ENCODE measurements at regions of chr11 and their contacts with region 1.

Region 1: GRCh38 chr11:128522055-128522942 is 65.1 kb downstream of the ETS1 start:
- DNase-seq: peak; percentile 97
- ATAC-seq: peak; percentile 93
- H3K4me3 ChIP-seq: peak overlapping the region; percentile 82 to 93
- H3K27ac ChIP-seq: peak overlapping the region; percentile 94
- H3K4me1 ChIP-seq: peaks cover 41% of the 10 kb centered on the region
- H3K27me3 ChIP-seq: no peaks in the 10 kb centered on the region
- CTCF ChIP-seq: no peak

Region 2: DNA sequence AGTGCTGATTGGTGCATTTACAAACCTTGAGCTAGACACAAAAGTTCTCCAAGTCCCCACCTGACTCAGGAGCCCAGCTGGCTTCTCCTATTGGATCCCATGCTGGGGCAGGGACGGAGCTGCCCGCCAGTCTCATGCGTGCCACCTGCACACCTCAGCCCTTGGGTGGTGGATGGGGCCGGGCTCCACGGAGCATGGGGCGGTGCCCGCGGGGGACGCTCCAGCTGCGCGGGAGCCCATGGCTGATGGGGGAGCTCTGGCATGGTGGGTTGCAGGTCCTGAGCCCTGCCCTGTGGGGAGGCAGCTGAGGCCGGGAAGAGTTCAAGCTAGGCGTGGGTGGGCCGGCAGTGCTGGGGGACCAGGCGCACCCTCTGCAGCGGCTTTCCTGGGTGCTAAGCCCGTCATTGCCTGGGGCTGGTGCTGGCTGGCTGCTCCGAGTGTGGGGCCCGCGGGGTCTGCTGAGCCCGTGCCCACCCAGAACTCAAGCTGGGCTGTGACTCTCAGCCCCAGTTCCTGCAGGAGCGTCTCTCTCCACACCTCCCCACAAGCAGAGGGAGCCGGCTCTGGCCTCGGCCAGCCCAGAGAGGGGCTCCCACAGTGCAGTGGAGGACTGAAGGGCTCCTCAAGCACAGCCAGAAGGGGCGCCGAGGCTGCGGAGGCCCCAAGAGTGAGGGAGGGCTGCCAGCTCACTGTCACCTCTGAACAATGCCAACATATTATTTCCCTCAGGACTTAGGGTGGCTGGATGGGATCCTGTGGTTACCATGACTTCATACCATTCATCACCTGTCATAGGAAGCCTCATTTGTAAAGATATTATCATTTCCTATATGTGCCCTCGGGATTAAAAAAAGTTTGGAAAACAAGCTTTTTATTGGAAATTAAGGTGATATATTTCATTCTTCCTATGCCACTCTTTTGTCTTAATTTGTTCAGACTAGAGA is 623.6 kb before region 1 on chr11:
- CTCF ChIA-PET with region 1: no interaction called
- POLR2A ChIA-PET with region 1: interaction called, 14 read pairs
- in situ Hi-C with region 1: no loop called
- intact Hi-C with region 1: no loop called
- DNase-seq: no peak
- ATAC-seq: no peak
- H3K4me3 ChIP-seq: no peak overlapping the region
- H3K27ac ChIP-seq: no peak overlapping the region
- H3K4me1 ChIP-seq: no peaks in the 10 kb centered on the region
- H3K27me3 ChIP-seq: no peaks in the 10 kb centered on the region
- CTCF ChIP-seq: no peak

Region 3: GRCh38 chr11:128482512-128483191 is 39.6 kb before region 1 on chr11:
- CTCF ChIA-PET with region 1: no interaction called
- POLR2A ChIA-PET with region 1: no interaction called
- in situ Hi-C with region 1: no loop called
- intact Hi-C with region 1: no loop called
- DNase-seq: no peak
- ATAC-seq: no peak
- H3K4me3 ChIP-seq: no peak overlapping the region
- H3K27ac ChIP-seq: no peak overlapping the region
- H3K4me1 ChIP-seq: no peaks in the 10 kb centered on the region
- H3K27me3 ChIP-seq: no peaks in the 10 kb centered on the region
- CTCF ChIP-seq: no peak

Region 4: GRCh38 chr11:128506999-128507611 is 15.2 kb before region 1 on chr11:
- CTCF ChIA-PET with region 1: interaction called, 5 read pairs
- POLR2A ChIA-PET with region 1: interaction called, 11 read pairs
- in situ Hi-C with region 1: no loop called
- intact Hi-C with region 1: no loop called
- DNase-seq: no peak
- ATAC-seq: peak; percentile 79
- H3K4me3 ChIP-seq: peak overlapping the region; percentile 29 to 58
- H3K27ac ChIP-seq: peak overlapping the region; percentile 96
- H3K4me1 ChIP-seq: peaks cover 100% of the 10 kb centered on the region
- H3K27me3 ChIP-seq: no peaks in the 10 kb centered on the region
- CTCF ChIP-seq: no peak

Region 5: DNA sequence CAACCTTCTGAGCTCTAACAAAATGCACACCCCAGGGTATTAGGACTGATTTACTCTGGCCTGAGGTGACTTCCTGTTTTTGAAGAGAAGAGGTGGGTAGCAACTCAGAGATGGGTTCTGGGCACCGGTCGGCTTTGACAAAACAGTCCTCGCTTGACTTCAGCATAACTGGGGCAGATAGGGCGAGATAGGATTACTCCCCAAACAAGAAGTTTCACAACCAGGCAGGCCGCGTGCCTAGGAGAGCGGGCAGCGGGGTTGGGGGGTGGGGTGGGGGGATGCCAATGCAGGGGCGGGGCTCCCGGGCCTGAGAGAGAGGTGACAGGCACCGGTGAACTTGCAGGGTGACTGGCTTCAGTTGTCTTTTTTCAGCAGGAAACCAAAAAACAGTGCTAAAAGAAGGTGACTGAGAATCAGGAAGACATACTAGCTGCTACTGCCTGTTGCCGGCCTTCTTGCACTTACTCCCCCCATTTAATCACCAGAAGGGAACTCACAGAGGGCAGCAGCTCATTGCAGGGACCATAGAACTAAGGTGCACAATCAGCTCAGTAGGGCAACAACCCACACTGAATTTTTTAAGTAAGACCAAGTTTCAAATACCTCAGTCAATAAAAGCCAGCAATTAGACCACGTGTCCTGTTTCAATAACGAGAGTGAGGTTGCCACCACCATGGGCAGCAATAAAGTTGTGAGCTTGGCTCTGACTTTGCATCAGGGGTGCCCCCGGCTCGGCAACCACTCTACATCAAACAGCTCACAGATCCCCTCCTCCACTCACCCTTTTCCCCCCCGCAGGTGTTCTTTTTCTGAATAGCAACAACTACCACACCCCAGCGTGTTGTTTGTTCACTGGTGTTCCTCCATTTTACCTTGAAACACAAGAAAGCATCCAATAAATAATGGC is 102.2 kb after region 1 on chr11:
- CTCF ChIA-PET with region 1: no interaction called
- POLR2A ChIA-PET with region 1: interaction called, 11 read pairs
- in situ Hi-C with region 1: no loop called
- intact Hi-C with region 1: no loop called
- DNase-seq: no peak
- ATAC-seq: no peak
- H3K4me3 ChIP-seq: no peak overlapping the region
- H3K27ac ChIP-seq: no peak overlapping the region
- H3K4me1 ChIP-seq: no peaks in the 10 kb centered on the region
- H3K27me3 ChIP-seq: no peaks in the 10 kb centered on the region
- CTCF ChIP-seq: no peak

Region 6: DNA sequence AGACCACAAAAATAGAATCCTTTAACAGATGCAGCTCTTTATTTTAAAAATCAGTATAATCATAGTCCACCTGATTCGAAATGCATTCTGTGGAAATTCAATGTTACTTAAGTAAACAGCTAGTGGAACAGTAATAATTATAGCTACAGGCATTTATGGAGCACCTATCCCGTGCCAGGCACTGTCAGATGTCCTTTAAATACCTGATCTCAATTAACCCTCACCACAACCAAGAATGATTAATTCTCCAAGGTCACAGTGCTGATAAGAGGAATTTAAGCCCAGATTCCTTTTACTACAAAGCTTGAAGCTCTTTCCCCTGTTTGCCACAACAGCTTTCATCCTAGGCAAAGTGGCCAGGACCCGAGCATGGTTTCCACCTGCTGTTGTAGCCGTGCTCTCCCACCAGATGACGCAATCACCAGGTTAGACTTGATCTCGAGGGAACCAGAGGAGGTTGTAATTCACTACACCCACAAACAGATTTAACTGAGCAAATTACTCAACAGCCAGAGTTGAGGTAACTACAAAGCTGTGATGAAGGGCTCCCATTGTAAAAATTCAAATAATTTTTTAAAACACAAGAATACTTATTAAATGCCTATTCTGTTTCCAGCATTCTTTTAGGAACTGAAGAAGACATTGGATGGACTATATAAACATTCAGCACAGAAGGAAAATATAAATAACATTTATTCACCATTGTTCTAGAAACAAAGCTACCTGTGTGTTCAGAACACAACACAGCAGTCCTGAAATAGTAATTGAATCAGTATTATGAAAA is 1470.1 kb after region 1 on chr11:
- CTCF ChIA-PET with region 1: no interaction called
- POLR2A ChIA-PET with region 1: interaction called, 19 read pairs
- in situ Hi-C with region 1: no loop called
- intact Hi-C with region 1: no loop called
- DNase-seq: no peak
- ATAC-seq: peak; percentile 82
- H3K4me3 ChIP-seq: no peak overlapping the region
- H3K27ac ChIP-seq: peak overlapping the region; percentile 62; the same call in 1 of the 2 replicates
- H3K4me1 ChIP-seq: peaks cover 18% of the 10 kb centered on the region; the same call in 1 of the 2 replicates
- H3K27me3 ChIP-seq: no peaks in the 10 kb centered on the region
- CTCF ChIP-seq: no peak

Measured in Panc1 (cell line).